IMR-90 (cell line): ENCODE measurements at regions of chr15 and their contacts with region 1.

Region 1: DNA sequence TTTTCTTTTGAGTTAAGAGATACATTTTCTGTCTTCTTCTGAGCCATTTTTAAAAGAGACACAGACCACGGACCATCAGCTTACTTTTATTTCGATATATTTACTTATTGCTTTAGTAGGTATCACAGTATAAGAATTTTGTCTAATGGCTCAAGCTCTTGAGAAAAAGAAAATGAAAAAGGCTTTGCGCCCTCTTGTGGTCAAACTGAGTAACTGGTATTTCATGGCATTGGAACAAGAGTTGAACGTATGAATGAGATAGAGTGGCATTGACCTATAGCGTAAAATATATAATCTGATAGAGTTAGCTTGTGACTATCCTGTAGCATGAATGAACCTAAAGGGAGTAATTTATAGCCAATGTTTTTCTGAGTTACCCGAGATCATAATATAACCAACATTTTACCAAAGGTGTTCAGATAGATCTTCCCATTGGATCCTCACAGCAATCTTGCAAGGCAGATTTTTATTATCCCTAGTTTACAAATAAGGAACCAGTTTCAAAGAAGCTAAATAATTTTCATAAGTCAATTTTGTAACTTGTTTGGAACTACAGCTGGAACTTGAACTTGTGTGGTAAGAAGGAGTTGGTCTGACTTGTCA is 154.6 kb downstream of the POLR2M start:
- DNase-seq: peak; percentile 66
- ATAC-seq: peak; percentile 73
- H3K4me3 ChIP-seq: no peak overlapping the region
- H3K27ac ChIP-seq: no peak overlapping the region
- H3K4me1 ChIP-seq: no peaks in the 10 kb centered on the region
- H3K27me3 ChIP-seq: peaks cover 2% of the 10 kb centered on the region
- CTCF ChIP-seq: peak; percentile 73
- POLR2A ChIP-seq: no peak
- RAD21 ChIP-seq: peak; percentile 49

Region 2: GRCh38 chr15:57561041-57561711 is 300.0 kb before region 1 on chr15:
- CTCF ChIA-PET with region 1: interaction called, 3 read pairs
- POLR2A ChIA-PET with region 1: no interaction called
- dilution Hi-C with region 1: no loop called
- in situ Hi-C with region 1: loop called (anchors 10 kb)
- intact Hi-C with region 1: loop called (anchors 1 kb)
- DNase-seq: peak; percentile 65
- ATAC-seq: peak; percentile 100
- H3K4me3 ChIP-seq: no peak overlapping the region
- H3K27ac ChIP-seq: no peak overlapping the region
- H3K4me1 ChIP-seq: no peaks in the 10 kb centered on the region
- H3K27me3 ChIP-seq: peaks cover 18% of the 10 kb centered on the region
- CTCF ChIP-seq: peak; percentile 81
- POLR2A ChIP-seq: no peak
- RAD21 ChIP-seq: peak; percentile 68

Region 3: GRCh38 chr15:57640935-57641682 is 220.0 kb before region 1 on chr15:
- CTCF ChIA-PET with region 1: interaction called, 3 read pairs
- POLR2A ChIA-PET with region 1: no interaction called
- dilution Hi-C with region 1: no loop called
- in situ Hi-C with region 1: no loop called
- intact Hi-C with region 1: loop called (anchors 1 kb)
- DNase-seq: peak; percentile 12
- ATAC-seq: peak; percentile 69
- H3K4me3 ChIP-seq: no peak overlapping the region
- H3K27ac ChIP-seq: no peak overlapping the region
- H3K4me1 ChIP-seq: no peaks in the 10 kb centered on the region
- H3K27me3 ChIP-seq: peaks cover 4% of the 10 kb centered on the region
- CTCF ChIP-seq: peak; percentile 38
- POLR2A ChIP-seq: no peak
- RAD21 ChIP-seq: peak; percentile 43

Region 4: DNA sequence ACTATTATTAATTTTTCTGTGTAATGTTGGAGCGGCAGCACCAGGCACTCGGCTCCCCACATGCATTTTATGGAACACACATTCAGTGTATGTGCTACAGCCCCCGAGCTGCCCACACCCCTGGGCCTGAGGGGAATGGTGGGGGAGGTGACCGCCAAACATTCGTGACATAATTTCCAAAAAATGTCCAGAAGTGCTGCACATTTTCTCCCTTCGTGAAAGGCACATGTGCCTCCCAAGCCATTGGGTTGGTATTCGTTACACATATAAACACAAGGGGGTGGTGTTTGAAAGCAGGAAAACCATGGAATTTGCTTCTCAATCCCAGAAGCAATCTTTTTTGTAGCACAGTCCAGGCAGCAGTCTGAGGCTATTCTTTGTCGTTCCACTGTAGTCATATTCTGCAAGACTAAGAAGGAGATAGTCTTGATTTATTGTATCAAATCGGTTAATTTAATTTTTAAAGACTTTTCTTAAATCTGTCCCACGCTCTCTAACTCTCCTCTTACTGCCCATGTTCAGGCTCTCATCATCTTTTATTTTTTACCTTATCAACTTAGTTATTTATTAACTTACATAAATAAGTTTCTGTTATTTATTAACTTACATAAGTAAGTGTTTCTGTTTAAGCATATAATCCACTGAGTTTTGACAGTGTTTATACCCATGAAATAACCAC is 193.8 kb before region 1 on chr15:
- CTCF ChIA-PET with region 1: interaction called, 6 read pairs
- POLR2A ChIA-PET with region 1: no interaction called
- dilution Hi-C with region 1: no loop called
- in situ Hi-C with region 1: loop called (anchors 10 kb)
- intact Hi-C with region 1: loop called (anchors 1 kb)
- DNase-seq: peak; percentile 71
- ATAC-seq: peak; percentile 97
- H3K4me3 ChIP-seq: no peak overlapping the region
- H3K27ac ChIP-seq: no peak overlapping the region
- H3K4me1 ChIP-seq: no peaks in the 10 kb centered on the region
- H3K27me3 ChIP-seq: peaks cover 8% of the 10 kb centered on the region
- CTCF ChIP-seq: peak; percentile 57
- POLR2A ChIP-seq: no peak
- RAD21 ChIP-seq: peak; percentile 66

Region 5: GRCh38 chr15:57732526-57733331 is 128.4 kb before region 1 on chr15:
- CTCF ChIA-PET with region 1: interaction called, 5 read pairs
- POLR2A ChIA-PET with region 1: no interaction called
- dilution Hi-C with region 1: no loop called
- in situ Hi-C with region 1: no loop called
- intact Hi-C with region 1: loop called (anchors 5 kb)
- DNase-seq: peak; percentile 50
- ATAC-seq: peak; percentile 74
- H3K4me3 ChIP-seq: no peak overlapping the region
- H3K27ac ChIP-seq: no peak overlapping the region
- H3K4me1 ChIP-seq: no peaks in the 10 kb centered on the region
- H3K27me3 ChIP-seq: no peaks in the 10 kb centered on the region
- CTCF ChIP-seq: peak; percentile 66
- POLR2A ChIP-seq: no peak
- RAD21 ChIP-seq: peak; percentile 38; the same call in 1 of the 2 replicates

Region 6: GRCh38 chr15:57751177-57751800 is 109.8 kb before region 1 on chr15:
- CTCF ChIA-PET with region 1: interaction called, 23 read pairs
- POLR2A ChIA-PET with region 1: no interaction called
- dilution Hi-C with region 1: no loop called
- in situ Hi-C with region 1: no loop called
- intact Hi-C with region 1: loop called (anchors 1 kb)
- DNase-seq: peak; percentile 40
- ATAC-seq: peak; percentile 73
- H3K4me3 ChIP-seq: no peak overlapping the region
- H3K27ac ChIP-seq: no peak overlapping the region
- H3K4me1 ChIP-seq: no peaks in the 10 kb centered on the region
- H3K27me3 ChIP-seq: no peaks in the 10 kb centered on the region; the same call in 1 of the 2 replicates
- CTCF ChIP-seq: peak; percentile 51
- POLR2A ChIP-seq: no peak
- RAD21 ChIP-seq: peak; percentile 55

Region 7: GRCh38 chr15:57872281-57873030 is 11.3 kb after region 1 on chr15:
- CTCF ChIA-PET with region 1: interaction called, 10 read pairs
- POLR2A ChIA-PET with region 1: no interaction called
- dilution Hi-C with region 1: no loop called
- in situ Hi-C with region 1: no loop called
- intact Hi-C with region 1: no loop called
- DNase-seq: no peak
- ATAC-seq: no peak
- H3K4me3 ChIP-seq: no peak overlapping the region
- H3K27ac ChIP-seq: no peak overlapping the region
- H3K4me1 ChIP-seq: no peaks in the 10 kb centered on the region
- H3K27me3 ChIP-seq: no peaks in the 10 kb centered on the region
- CTCF ChIP-seq: no peak
- POLR2A ChIP-seq: no peak
- RAD21 ChIP-seq: no peak

Region 8: GRCh38 chr15:59792359-59792758 is 1931.2 kb after region 1 on chr15:
- CTCF ChIA-PET with region 1: no interaction called
- POLR2A ChIA-PET with region 1: no interaction called
- dilution Hi-C with region 1: no loop called
- in situ Hi-C with region 1: no loop called
- intact Hi-C with region 1: no loop called
- DNase-seq: no peak
- ATAC-seq: no peak
- H3K4me3 ChIP-seq: no peak overlapping the region
- H3K27ac ChIP-seq: no peak overlapping the region
- H3K4me1 ChIP-seq: no peaks in the 10 kb centered on the region
- H3K27me3 ChIP-seq: peaks cover 2% of the 10 kb centered on the region; the same call in 1 of the 2 replicates
- CTCF ChIP-seq: no peak
- POLR2A ChIP-seq: no peak
- RAD21 ChIP-seq: no peak